A673 (cell line): ENCODE measurements at regions of chr9 and their contacts with region 1.

Region 1: GRCh38 chr9:91681461-91682305 is 258.1 kb upstream of the NFIL3 start:
- DNase-seq: peak; percentile 87
- H3K4me3 ChIP-seq: no peak overlapping the region
- H3K27ac ChIP-seq: no peak overlapping the region
- H3K4me1 ChIP-seq: peaks cover 8% of the 10 kb centered on the region
- H3K27me3 ChIP-seq: no peaks in the 10 kb centered on the region
- CTCF ChIP-seq: peak; percentile 97

Region 2: GRCh38 chr9:91036826-91037510 is 644.7 kb before region 1 on chr9:
- CTCF ChIA-PET with region 1: no interaction called
- POLR2A ChIA-PET with region 1: no interaction called
- intact Hi-C with region 1: loop called (anchors 10 kb)
- DNase-seq: peak; percentile 69
- H3K4me3 ChIP-seq: no peak overlapping the region
- H3K27ac ChIP-seq: no peak overlapping the region
- H3K4me1 ChIP-seq: no peaks in the 10 kb centered on the region
- H3K27me3 ChIP-seq: no peaks in the 10 kb centered on the region
- CTCF ChIP-seq: peak; percentile 53

Region 3: GRCh38 chr9:91443321-91443993 is 238.2 kb before region 1 on chr9:
- CTCF ChIA-PET with region 1: no interaction called
- POLR2A ChIA-PET with region 1: no interaction called
- intact Hi-C with region 1: no loop called
- DNase-seq: no peak
- H3K4me3 ChIP-seq: no peak overlapping the region
- H3K27ac ChIP-seq: no peak overlapping the region
- H3K4me1 ChIP-seq: no peaks in the 10 kb centered on the region
- H3K27me3 ChIP-seq: peaks cover 12% of the 10 kb centered on the region
- CTCF ChIP-seq: no peak

Region 4: GRCh38 chr9:92026206-92027002 is 344.7 kb after region 1 on chr9:
- CTCF ChIA-PET with region 1: no interaction called
- POLR2A ChIA-PET with region 1: no interaction called
- intact Hi-C with region 1: no loop called
- DNase-seq: no peak
- H3K4me3 ChIP-seq: no peak overlapping the region
- H3K27ac ChIP-seq: no peak overlapping the region
- H3K4me1 ChIP-seq: no peaks in the 10 kb centered on the region
- H3K27me3 ChIP-seq: no peaks in the 10 kb centered on the region
- CTCF ChIP-seq: no peak

Region 5: GRCh38 chr9:92820964-92821363 is 1139.3 kb after region 1 on chr9:
- CTCF ChIA-PET with region 1: no interaction called
- POLR2A ChIA-PET with region 1: no interaction called
- intact Hi-C with region 1: no loop called
- DNase-seq: no peak
- H3K4me3 ChIP-seq: no peak overlapping the region
- H3K27ac ChIP-seq: no peak overlapping the region
- H3K4me1 ChIP-seq: no peaks in the 10 kb centered on the region
- H3K27me3 ChIP-seq: peaks cover 46% of the 10 kb centered on the region
- CTCF ChIP-seq: no peak